ENCODE measurements at regions of chr11 and their contacts with region 1.

Region 1: GRCh38 chr11:17389211-17389956 is 925 bp upstream of the KCNJ11 start:
- DNase-seq: peak; percentile 81 to 94
- ATAC-seq: peak; percentile 35 to 45
- H3K4me3 ChIP-seq: peak overlapping the region; percentile 68 to 81 (median 76)
- H3K27ac ChIP-seq: peak overlapping the region; percentile 90 to 98 (median 97)
- H3K4me1 ChIP-seq: peaks cover 12 to 29% of the 10 kb centered on the region in 2 donors
- H3K27me3 ChIP-seq: no peaks in the 10 kb centered on the region
- CTCF ChIP-seq: peak; percentile 39 to 85 (median 69)
- POLR2A ChIP-seq: peak in 1 of 2 donors; percentile 21

Region 2: DNA sequence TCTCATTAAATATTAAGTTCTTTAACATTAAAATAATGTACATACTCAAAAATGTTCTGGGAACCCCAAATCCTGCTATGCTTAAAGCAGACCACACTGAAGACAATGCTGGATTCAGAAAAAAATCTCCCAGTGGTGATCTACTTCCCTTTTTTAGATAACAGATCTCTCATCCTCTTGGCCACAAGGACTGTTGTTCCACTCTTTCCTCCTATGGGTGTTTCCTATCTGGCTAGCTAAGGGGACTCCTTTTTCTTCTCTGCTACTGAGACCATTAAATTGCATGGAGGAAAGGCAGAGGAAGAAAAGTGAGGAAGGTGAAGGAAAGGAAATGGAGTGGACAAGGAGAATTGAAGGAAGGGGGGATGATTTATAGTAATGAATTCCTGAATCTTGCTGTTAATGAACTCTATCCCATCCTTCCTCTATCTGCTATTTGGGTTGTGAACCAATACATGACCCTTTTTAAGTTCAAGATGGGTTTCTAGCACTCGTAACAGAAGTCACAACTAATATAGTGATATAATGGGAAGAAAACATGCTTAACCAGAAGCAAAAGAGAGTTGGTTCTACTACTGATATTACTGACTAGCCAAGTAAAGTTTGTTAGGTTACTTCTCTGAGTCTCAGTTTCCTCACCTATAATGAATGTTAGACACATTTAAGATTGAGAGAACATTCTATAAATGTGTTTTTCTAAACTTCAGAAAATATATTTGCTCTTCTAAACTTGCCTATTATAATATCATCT is 234.8 kb before region 1 on chr11:
- in situ Hi-C with region 1: no loop called
- intact Hi-C with region 1: no loop called
- DNase-seq: no peak
- ATAC-seq: no peak
- H3K4me3 ChIP-seq: no peak overlapping the region
- H3K27ac ChIP-seq: peak overlapping the region in 3 of 4 donors; percentile 7 to 19 (median 12)
- H3K4me1 ChIP-seq: peaks cover 11 to 42% of the 10 kb centered on the region in 2 donors
- H3K27me3 ChIP-seq: no peaks in the 10 kb centered on the region
- CTCF ChIP-seq: no peak
- POLR2A ChIP-seq: no peak

Region 3: DNA sequence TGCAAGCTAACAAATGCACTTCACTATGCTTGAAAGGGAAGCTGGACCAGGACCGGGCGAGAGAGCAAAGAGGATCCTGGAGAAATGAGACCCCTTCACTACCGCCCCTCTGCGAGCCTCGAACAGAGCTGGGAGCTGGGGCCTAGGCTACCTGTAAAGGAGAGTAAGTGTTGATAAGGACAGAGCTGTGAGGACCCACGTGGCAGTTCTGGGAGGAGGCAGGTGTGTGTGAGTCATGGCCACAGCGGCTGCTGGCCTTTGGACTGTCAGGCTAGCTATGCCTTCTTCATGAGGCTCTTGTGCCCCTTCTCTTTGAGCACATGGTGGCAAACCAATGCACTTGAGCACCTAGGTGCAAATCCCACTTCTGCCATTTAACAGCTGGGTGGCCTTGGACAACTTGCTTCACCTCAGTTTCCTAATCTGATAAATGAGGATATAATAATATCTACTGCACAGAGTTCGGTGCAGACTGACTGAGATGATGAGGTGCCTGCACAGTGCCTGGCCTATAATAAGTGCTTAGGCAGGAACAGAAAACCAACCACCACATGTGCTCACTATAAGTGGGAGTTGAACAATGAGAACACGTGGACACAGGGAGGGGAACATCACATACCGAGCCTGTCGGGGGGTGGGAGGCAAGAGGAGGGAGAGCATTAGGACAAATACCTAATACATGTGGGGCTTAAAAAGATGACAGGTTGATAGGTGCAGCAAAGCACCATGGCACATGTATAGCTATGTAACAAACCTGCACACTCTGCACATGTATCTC is 34.3 kb after region 1 on chr11:
- in situ Hi-C with region 1: no loop called
- intact Hi-C with region 1: loop called (anchors 5 kb)
- DNase-seq: no peak
- ATAC-seq: no peak
- H3K4me3 ChIP-seq: no peak overlapping the region
- H3K27ac ChIP-seq: no peak overlapping the region
- H3K4me1 ChIP-seq: peaks cover 13 to 15% of the 10 kb centered on the region in 2 donors
- H3K27me3 ChIP-seq: no peaks in the 10 kb centered on the region
- CTCF ChIP-seq: no peak
- POLR2A ChIP-seq: no peak

Region 4: GRCh38 chr11:17432002-17432401 is 42.6 kb after region 1 on chr11:
- in situ Hi-C with region 1: no loop called
- intact Hi-C with region 1: loop called (anchors 5 kb)
- DNase-seq: peak in 1 of 2 donors; percentile 62
- ATAC-seq: peak; percentile 54 to 83
- H3K4me3 ChIP-seq: no peak overlapping the region
- H3K27ac ChIP-seq: peak overlapping the region; percentile 39 to 54 (median 44)
- H3K4me1 ChIP-seq: peaks cover 31 to 34% of the 10 kb centered on the region in 2 donors
- H3K27me3 ChIP-seq: no peaks in the 10 kb centered on the region
- CTCF ChIP-seq: no peak
- POLR2A ChIP-seq: no peak

Region 5: DNA sequence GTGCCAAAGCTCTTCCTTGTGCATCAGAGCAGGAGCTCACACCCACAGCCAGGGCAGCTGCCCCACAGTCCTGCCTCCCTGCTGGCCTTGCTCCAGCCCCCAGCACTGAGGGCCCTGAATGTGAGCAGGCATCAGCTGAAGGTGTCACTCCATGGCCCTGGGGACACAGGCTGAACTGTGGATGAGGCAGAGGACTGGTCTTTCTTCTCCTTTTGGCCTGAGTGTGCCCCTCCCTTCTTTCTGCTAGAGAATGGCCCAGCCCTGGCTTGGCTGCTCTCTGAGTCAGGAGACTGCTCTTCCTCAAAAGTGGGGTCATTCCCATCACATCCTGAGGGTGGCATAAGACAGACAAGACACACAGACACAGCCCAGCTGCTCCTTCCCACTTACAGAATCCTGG is 173.9 kb after region 1 on chr11:
- in situ Hi-C with region 1: no loop called
- intact Hi-C with region 1: no loop called
- DNase-seq: no peak
- ATAC-seq: no peak
- H3K4me3 ChIP-seq: no peak overlapping the region
- H3K27ac ChIP-seq: no peak overlapping the region
- H3K4me1 ChIP-seq: no peaks in the 10 kb centered on the region
- H3K27me3 ChIP-seq: no peaks in the 10 kb centered on the region
- CTCF ChIP-seq: no peak
- POLR2A ChIP-seq: no peak

Region 6: DNA sequence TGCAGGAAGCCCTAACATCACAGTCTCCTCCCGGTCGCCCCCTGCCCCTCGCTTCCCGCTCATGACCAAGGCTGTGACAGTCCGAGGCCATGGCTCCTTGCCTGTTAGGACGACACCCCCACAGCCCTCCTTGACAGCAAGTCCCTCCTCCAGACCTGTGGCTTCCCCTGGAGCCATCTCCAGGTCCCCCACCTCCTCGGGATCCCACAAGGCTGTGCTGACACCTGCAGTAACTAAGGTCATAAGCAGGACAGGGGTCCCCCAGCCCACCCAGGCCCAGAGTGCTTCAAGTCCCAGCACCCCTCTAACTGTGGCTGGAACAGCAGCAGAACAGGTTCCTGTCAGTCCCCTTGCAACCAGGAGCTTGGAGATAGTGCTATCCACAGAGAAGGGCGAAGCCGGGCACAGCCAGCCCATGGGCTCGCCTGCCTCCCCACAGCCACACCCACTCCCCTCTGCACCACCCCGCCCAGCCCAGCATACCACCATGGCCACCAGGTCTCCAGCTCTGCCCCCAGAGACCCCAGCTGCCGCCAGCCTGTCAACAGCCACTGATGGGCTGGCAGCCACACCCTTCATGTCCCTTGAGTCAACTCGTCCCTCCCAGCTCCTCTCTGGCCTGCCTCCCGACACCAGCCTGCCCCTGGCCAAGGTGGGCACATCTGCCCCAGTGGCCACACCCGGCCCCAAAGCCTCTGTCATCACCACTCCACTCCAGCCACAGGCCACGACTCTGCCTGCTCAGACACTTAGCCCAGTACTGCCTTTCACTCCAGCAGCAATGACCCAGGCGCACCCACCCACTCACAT is 220.9 kb after region 1 on chr11:
- in situ Hi-C with region 1: no loop called
- intact Hi-C with region 1: no loop called
- DNase-seq: peak in 1 of 2 donors; percentile 12
- ATAC-seq: no peak
- H3K4me3 ChIP-seq: no peak overlapping the region
- H3K27ac ChIP-seq: no peak overlapping the region
- H3K4me1 ChIP-seq: peaks cover 0 to 8% of the 10 kb centered on the region in 2 donors
- H3K27me3 ChIP-seq: no peaks in the 10 kb centered on the region
- CTCF ChIP-seq: no peak
- POLR2A ChIP-seq: no peak

Region 7: DNA sequence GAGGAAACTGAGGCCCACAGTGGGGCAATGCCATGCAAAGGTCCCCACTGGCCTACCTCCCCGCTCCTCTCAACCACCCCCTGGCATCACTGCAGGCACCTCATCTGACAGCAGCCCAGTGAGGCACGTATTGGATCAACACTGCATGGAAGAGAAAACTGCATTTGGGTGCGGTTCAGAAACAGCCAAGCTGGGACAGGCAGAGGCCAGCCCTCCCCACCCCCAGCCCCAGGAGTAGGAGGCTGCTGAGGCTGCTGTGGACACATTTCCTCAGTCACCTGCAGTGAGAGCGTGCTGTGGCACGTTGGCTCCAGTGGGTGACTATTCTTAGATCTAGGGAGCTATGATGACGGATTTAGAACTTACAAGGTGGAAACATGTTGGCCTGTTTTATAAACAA is 408.9 kb after region 1 on chr11:
- in situ Hi-C with region 1: no loop called
- intact Hi-C with region 1: loop called (anchors 5 kb)
- DNase-seq: peak; percentile 90 to 95
- ATAC-seq: peak; percentile 90 to 91
- H3K4me3 ChIP-seq: peak overlapping the region in 2 of 4 donors; percentile 12 to 35
- H3K27ac ChIP-seq: peak overlapping the region; percentile 90 to 96 (median 94)
- H3K4me1 ChIP-seq: peaks cover 50 to 52% of the 10 kb centered on the region in 2 donors
- H3K27me3 ChIP-seq: no peaks in the 10 kb centered on the region
- CTCF ChIP-seq: no peak
- POLR2A ChIP-seq: peak in 1 of 2 donors; percentile 35